ENCODE measurements at regions of chr18 and their contacts with region 1.

Region 1: GRCh38 chr18:41659438-41660133 is 295.4 kb upstream of the PIK3C3 start:
- DNase-seq: no peak
- H3K4me3 ChIP-seq: no peak overlapping the region
- H3K27ac ChIP-seq: no peak overlapping the region
- H3K4me1 ChIP-seq: no peaks in the 10 kb centered on the region
- H3K27me3 ChIP-seq: no peaks in the 10 kb centered on the region
- CTCF ChIP-seq: no peak
- EP300 ChIP-seq: no peak
- POLR2A ChIP-seq: no peak

Region 2: DNA sequence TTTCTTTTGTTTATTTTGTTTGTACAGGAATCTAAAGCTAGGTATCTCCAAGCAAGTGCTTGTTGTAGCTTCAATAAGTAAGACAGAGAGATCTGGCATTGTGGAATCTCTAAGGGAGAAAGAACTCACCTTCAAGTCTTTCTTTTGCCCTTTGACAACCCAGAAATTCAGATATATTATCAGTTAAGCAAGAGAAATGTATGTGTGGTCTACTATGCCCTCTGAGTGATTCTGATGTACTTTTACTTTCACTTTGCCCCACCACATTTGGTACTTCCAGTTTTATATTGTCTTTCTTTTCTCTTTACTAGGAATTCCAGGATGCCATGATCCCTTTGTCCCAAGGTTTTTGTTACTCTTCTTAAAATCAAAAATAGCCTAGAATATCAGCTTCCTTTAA is 35.9 kb after region 1 on chr18:
- in situ Hi-C with region 1: no loop called
- intact Hi-C with region 1: loop called (anchors 2 kb)
- DNase-seq: no peak
- H3K4me3 ChIP-seq: no peak overlapping the region
- H3K27ac ChIP-seq: no peak overlapping the region
- H3K4me1 ChIP-seq: no peaks in the 10 kb centered on the region
- H3K27me3 ChIP-seq: no peaks in the 10 kb centered on the region
- CTCF ChIP-seq: no peak
- EP300 ChIP-seq: no peak
- POLR2A ChIP-seq: no peak

Measured in transverse colon (tissue), 4 donors.